Head of caudate nucleus (tissue), 42 donors: ENCODE measurements at regions of chr11 and their contacts with region 1.

Region 1: GRCh38 chr11:31369348-31370329 is at the starts of genes DCDC1 and DNAJC24:
- DNase-seq: peak; percentile 89 to 97 (median 93)

Region 2: DNA sequence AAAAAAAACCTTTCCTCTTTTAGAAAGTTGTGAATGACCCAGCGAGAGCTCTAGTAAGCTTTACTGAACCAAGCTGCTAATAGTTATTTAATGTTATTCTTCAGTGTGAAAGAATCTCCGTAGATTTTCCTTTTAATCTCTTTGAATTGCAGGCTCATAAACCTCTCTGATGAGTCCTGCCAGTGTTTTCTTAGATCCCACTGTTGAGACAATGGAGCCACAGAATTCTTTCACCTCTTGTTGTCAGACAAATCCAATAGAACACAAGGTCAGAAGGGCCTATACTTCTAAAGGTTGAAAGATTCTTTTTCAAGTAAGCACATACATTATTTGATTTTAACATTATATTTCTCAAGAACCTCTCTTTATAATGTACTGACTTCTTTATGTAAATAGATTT is 52.2 kb after region 1 on chr11:
- intact Hi-C with region 1: loop called (anchors 10 kb)
- DNase-seq: no peak

Region 3: GRCh38 chr11:31509429-31510345 is 140.0 kb after region 1 on chr11 and contains the starts of genes ELP4 and IMMP1L:
- intact Hi-C with region 1: loop called (anchors 10 kb)
- DNase-seq: peak; percentile 93 to 99 (median 97)